HCT116 (cell line): ENCODE measurements at regions of chr6 and their contacts with region 1.

Region 1: DNA sequence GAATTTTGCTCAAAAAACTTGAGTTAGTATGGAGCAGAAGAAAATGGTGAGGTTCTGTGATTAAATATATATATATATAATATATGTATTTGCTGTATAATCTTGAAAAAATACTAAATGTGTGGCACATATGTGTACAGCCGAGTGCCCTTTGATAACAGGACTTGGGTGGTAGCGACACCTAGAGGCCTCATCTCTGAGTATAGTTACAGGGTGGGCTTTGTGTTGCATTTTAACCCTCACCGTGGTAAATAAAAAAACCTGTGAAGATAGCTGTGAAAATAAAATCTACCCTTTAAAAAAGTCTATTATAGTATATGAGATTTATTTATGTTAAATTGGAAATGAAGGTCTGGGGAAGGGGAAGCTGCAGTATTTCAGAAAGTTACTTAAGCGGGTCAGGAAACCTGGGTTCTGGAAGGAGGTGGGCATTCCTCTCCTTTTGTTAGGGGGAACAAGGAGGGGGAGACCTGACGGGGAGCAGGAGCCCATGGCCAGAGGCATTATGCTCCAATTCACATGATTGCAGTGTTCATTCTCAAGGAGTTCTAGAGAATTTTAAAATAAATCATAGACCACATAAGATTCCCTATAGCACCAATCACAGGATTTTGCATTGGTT is 82.7 kb downstream of the SH3BGRL2 start:
- DNase-seq: peak; percentile 47
- ATAC-seq: peak; percentile 92
- H3K4me3 ChIP-seq: no peak overlapping the region
- H3K27ac ChIP-seq: no peak overlapping the region
- H3K4me1 ChIP-seq: no peaks in the 10 kb centered on the region
- H3K27me3 ChIP-seq: no peaks in the 10 kb centered on the region
- CTCF ChIP-seq: peak; percentile 41 to 74 (median 69); a peak in 5 of 6 replicates
- POLR2A ChIP-seq: no peak
- RAD21 ChIP-seq: peak; percentile 73

Region 2: DNA sequence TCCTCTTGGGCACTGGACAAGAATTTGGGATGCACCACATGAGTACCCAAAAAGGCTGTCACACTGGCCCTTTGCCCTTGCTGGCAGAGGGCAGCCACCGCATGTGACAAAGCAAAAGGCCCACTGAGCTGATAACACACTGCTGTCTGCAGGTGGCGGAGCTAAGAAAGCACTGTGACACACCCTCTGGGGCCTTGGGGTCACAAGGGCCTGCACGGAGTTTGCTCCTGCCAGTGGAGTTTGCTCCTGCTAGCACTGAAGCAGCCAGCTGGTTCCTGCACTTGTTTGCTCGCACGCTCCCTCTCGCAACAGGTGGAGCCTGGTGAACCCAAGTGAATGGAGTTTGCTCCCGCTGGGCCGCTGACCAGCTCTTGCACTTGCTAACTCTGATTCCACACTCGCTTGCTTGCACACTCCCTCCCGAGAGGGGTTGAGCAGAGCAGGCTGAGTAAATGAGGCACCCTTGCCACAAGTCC is 309.1 kb before region 1 on chr6:
- CTCF ChIA-PET with region 1: no interaction called
- POLR2A ChIA-PET with region 1: no interaction called
- RAD21 ChIA-PET with region 1: no interaction called
- intact Hi-C with region 1: loop called (anchors 1 kb)
- DNase-seq: no peak
- ATAC-seq: no peak
- H3K4me3 ChIP-seq: no peak overlapping the region
- H3K27ac ChIP-seq: no peak overlapping the region
- H3K4me1 ChIP-seq: no peaks in the 10 kb centered on the region
- H3K27me3 ChIP-seq: no peaks in the 10 kb centered on the region
- CTCF ChIP-seq: no peak
- POLR2A ChIP-seq: no peak
- RAD21 ChIP-seq: no peak

Region 3: GRCh38 chr6:79687759-79688158 is 26.1 kb before region 1 on chr6:
- CTCF ChIA-PET with region 1: no interaction called
- POLR2A ChIA-PET with region 1: no interaction called
- RAD21 ChIA-PET with region 1: no interaction called
- intact Hi-C with region 1: no loop called
- DNase-seq: no peak
- ATAC-seq: no peak
- H3K4me3 ChIP-seq: no peak overlapping the region
- H3K27ac ChIP-seq: no peak overlapping the region
- H3K4me1 ChIP-seq: no peaks in the 10 kb centered on the region
- H3K27me3 ChIP-seq: no peaks in the 10 kb centered on the region
- CTCF ChIP-seq: no peak
- POLR2A ChIP-seq: no peak
- RAD21 ChIP-seq: no peak

Region 4: GRCh38 chr6:79824202-79824601 is 110.4 kb after region 1 on chr6:
- CTCF ChIA-PET with region 1: no interaction called
- POLR2A ChIA-PET with region 1: no interaction called
- RAD21 ChIA-PET with region 1: no interaction called
- intact Hi-C with region 1: no loop called
- DNase-seq: no peak
- ATAC-seq: no peak
- H3K4me3 ChIP-seq: no peak overlapping the region
- H3K27ac ChIP-seq: no peak overlapping the region
- H3K4me1 ChIP-seq: peaks cover 0 to 4% of the 10 kb centered on the region in 2 experiments; a peak in 1 of 4 replicates
- H3K27me3 ChIP-seq: no peaks in the 10 kb centered on the region
- CTCF ChIP-seq: no peak
- POLR2A ChIP-seq: no peak
- RAD21 ChIP-seq: no peak